ENCODE measurements at regions of chr4 and their contacts with region 1.

Region 1: GRCh38 chr4:163544407-163545038 is 50.0 kb downstream of the TMA16 start:
- DNase-seq: peak; percentile 73
- ATAC-seq: peak; percentile 93
- H3K4me3 Mint-ChIP-seq: no peak overlapping the region
- H3K27ac Mint-ChIP-seq: no peak overlapping the region
- H3K4me1 Mint-ChIP-seq: peaks cover 7% of the 10 kb centered on the region
- H3K27me3 Mint-ChIP-seq: no peaks in the 10 kb centered on the region

Region 2: DNA sequence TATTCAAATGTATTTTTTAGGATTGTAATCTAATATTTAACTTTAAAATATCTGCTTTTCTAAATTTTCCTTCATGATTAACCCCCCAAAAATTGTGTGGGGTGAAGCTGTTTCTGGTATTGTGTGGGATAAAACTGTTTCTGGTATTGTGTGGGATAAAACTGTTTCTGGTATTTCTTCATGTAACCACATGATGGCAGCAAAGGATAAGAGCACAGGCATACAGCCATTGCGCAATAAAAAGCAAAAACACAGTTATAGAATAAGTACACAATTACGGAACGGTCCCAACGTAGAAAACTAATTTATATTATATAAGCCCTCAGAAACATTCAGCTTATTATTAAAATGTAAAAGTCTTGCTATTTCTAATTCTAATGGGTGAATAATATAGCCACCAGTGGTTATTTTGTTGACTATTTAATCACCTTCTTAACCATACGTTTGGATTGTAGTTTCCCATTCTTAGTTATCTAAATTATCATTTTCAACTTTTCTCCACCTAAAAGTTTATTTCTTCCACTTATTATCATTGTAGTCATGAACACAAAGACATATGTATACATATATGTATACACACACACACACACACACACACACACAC is 1046.9 kb before region 1 on chr4:
- CTCF ChIA-PET with region 1: interaction called, 12 read pairs
- POLR2A ChIA-PET with region 1: no interaction called
- DNase-seq: no peak
- ATAC-seq: peak; percentile 44
- H3K4me3 Mint-ChIP-seq: no peak overlapping the region
- H3K27ac Mint-ChIP-seq: no peak overlapping the region
- H3K4me1 Mint-ChIP-seq: no peaks in the 10 kb centered on the region
- H3K27me3 Mint-ChIP-seq: no peaks in the 10 kb centered on the region

Region 3: GRCh38 chr4:163484906-163485305 is 59.6 kb before region 1 on chr4:
- CTCF ChIA-PET with region 1: interaction called, 76 read pairs
- POLR2A ChIA-PET with region 1: no interaction called
- DNase-seq: peak; percentile 75
- ATAC-seq: peak; percentile 61
- H3K4me3 Mint-ChIP-seq: no peak overlapping the region
- H3K27ac Mint-ChIP-seq: no peak overlapping the region
- H3K4me1 Mint-ChIP-seq: no peaks in the 10 kb centered on the region
- H3K27me3 Mint-ChIP-seq: peaks cover 34% of the 10 kb centered on the region

Region 4: DNA sequence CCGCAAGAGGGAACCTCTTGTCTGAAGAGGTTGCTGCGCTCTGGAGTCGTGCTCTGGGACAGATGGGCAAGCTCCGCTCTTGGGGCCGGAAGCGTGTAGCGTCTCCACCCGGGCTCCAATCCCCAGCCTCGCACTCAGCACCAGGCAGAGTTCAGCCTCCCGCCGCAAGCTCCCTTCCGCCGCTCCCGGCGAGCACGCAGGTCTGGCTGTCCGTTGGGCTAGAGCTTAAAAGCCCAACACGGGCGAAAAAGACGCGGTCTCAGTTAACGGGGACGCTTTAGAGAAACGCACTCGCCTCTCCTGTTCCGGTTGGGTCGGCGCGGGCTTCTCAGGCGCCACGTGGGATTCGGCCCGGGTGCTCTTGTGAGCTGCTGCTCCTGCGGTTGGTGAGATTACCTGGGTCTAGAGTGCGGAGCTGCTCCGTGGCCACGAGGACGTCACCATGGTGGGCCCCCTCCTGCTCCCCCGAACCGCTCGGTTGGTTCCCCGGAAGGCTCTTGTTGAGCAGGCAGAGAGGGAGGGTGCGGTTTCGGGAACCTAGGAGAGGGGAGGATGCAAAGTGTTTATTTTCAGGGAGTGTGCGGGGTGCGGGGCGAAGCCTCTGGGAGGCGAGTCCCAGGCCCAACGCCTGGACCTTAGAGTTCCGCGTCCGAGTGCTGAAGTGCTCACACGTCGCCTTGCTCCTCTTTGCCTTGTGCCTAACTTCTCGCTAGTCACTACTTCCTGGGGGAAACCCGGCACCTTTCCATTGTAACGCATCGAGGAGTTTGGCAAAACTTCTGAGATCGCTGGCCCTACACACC is 50.0 kb before region 1 on chr4 and contains the start of gene TMA16:
- CTCF ChIA-PET with region 1: interaction called, 35 read pairs
- POLR2A ChIA-PET with region 1: interaction called, 5 read pairs
- DNase-seq: peak; percentile 91
- ATAC-seq: peak; percentile 91
- H3K4me3 Mint-ChIP-seq: peak within 1 kb of the TSS; percentile 100
- H3K27ac Mint-ChIP-seq: peak within 1 kb of the TSS; percentile 99
- H3K4me1 Mint-ChIP-seq: peaks cover 35% of the 10 kb centered on the region
- H3K27me3 Mint-ChIP-seq: peaks cover 8% of the 10 kb centered on the region
- total RNA-seq, gene TMA16: 34.1 TPM

Region 5: DNA sequence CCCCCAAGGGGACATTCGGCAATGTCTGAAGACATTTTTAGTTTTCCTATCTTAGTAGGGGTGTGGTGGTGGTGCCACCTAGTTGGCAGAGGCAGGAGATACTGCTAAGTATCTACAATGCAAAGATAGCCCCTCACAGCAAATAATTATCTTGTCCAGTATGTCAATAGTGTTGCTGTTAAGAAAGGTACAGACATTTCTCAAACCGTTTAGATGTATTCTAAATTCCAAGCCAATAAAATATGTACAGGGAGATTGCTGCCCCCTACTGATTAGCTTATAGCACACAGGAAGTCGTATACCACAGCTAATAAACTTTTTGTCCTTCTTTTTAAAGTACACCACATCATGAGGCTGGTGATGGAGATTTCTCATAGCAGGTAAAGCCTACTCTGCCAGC is 210.5 kb after region 1 on chr4:
- CTCF ChIA-PET with region 1: interaction called, 11 read pairs
- POLR2A ChIA-PET with region 1: no interaction called
- DNase-seq: no peak
- ATAC-seq: no peak
- H3K4me3 Mint-ChIP-seq: no peak overlapping the region
- H3K27ac Mint-ChIP-seq: no peak overlapping the region
- H3K4me1 Mint-ChIP-seq: no peaks in the 10 kb centered on the region
- H3K27me3 Mint-ChIP-seq: no peaks in the 10 kb centered on the region

Measured in activated CD8-positive, alpha-beta T cell treated with anti-CD3 and anti-CD28 coated beads, Interleukin-2, amount 10 ng/mL, durations not matched to agents 7 days and 5 days (primary cell).